ENCODE measurements at regions of chr6 and their contacts with region 1.

Region 1: DNA sequence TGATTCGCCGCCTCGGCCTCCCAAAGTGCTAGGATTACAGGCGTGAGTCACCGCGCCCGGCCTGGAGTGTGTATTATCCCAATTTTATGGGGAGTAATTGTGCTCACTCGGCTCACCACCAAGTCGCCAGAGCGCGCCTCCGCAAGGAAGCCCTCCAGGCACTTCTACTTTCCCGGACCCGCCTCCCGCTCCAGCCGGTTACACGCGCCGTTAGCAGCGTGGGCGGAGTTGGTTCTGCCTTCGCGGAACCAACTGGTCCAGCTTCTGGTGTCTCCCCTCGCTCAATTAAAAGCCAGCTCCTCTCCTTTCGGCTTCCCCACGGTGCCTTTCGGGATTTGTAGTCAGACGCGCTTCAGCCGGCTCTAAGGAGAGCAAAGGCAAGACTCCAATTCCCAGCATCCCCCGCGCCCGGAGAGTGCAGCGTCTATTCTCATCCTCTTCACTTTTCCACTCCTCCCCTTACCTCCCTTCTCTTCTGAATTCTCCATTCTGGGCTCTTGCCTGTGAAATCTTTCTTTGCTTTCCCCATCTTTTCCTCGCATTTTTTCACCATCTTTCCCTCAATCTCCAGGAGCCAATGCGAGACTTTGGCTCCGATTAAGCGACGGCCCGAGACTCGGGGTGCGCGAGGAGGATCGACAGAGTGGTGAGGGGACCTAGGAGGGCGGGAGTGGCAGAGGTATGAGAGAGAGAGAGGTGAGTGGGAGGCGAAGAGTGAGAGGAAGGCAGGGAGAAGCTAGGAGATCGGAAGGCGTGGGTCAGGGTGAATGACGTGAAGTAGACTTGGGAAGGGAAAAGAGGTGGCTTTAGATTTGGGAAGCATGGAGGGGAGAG is at the start of gene GTF2H4:
- DNase-seq: peak; percentile 92
- H3K4me3 Mint-ChIP-seq: peak within 1 kb of the TSS; percentile 99
- H3K27ac Mint-ChIP-seq: peak within 1 kb of the TSS; percentile 72
- H3K4me1 Mint-ChIP-seq: peaks cover 15% of the 10 kb centered on the region
- H3K27me3 Mint-ChIP-seq: no peaks in the 10 kb centered on the region
- total RNA-seq, gene GTF2H4: 65.3 and 71.3 TPM in 2 replicates

Region 2: DNA sequence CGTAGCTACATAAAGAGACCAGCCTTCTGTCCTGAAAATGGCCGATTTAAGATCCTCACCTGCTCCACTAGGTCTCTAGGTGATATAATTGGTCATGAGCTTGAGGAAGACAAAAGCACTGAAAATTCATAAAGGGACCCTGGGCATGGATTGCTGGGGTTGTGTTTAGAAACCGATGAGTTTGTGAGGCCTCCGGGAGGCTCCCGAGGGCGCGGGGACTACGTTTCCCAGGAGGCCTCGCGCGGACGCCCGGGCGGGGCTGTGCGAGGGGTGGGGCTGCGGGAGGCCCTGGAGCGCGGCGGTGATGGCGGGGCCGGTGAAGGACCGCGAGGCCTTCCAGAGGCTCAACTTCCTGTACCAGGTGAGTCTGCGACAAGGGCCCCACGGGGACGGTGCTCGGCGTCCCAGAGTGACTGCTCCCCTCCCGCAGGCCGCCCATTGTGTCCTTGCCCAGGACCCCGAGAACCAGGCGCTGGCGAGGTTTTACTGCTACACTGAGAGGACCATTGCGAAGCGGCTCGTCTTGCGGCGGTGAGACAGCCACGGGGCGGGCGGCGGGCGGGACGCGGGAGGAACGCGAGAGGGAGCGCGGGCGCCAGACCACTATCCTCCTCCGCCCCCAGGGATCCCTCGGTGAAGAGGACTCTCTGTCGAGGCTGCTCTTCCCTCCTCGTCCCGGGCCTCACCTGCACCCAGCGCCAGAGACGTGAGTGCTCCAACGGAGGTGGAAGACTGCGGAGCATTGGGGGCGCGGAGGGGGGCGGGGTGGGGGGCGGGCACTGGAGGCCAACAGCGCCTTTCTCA is 562.9 kb before region 1 on chr6 and contains the start of gene RPP21:
- intact Hi-C with region 1: loop called (anchors 1 kb)
- DNase-seq: peak; percentile 84
- H3K4me3 Mint-ChIP-seq: peak within 1 kb of the TSS; percentile 91
- H3K27ac Mint-ChIP-seq: peak within 1 kb of the TSS; percentile 80
- H3K4me1 Mint-ChIP-seq: peaks cover 39% of the 10 kb centered on the region
- H3K27me3 Mint-ChIP-seq: peaks cover 5% of the 10 kb centered on the region
- total RNA-seq, gene RPP21: 54.2 and 62.8 TPM in 2 replicates

Region 3: GRCh38 chr6:30646458-30647241 is 261.3 kb before region 1 on chr6 and contains the start of gene C6orf136:
- intact Hi-C with region 1: loop called (anchors 1 kb)
- DNase-seq: peak; percentile 89
- H3K4me3 Mint-ChIP-seq: peak within 1 kb of the TSS; percentile 90
- H3K27ac Mint-ChIP-seq: peak within 1 kb of the TSS; percentile 91
- H3K4me1 Mint-ChIP-seq: peaks cover 23% of the 10 kb centered on the region
- H3K27me3 Mint-ChIP-seq: no peaks in the 10 kb centered on the region
- total RNA-seq, gene C6orf136: 23.9 and 36.0 TPM in 2 replicates

Region 4: DNA sequence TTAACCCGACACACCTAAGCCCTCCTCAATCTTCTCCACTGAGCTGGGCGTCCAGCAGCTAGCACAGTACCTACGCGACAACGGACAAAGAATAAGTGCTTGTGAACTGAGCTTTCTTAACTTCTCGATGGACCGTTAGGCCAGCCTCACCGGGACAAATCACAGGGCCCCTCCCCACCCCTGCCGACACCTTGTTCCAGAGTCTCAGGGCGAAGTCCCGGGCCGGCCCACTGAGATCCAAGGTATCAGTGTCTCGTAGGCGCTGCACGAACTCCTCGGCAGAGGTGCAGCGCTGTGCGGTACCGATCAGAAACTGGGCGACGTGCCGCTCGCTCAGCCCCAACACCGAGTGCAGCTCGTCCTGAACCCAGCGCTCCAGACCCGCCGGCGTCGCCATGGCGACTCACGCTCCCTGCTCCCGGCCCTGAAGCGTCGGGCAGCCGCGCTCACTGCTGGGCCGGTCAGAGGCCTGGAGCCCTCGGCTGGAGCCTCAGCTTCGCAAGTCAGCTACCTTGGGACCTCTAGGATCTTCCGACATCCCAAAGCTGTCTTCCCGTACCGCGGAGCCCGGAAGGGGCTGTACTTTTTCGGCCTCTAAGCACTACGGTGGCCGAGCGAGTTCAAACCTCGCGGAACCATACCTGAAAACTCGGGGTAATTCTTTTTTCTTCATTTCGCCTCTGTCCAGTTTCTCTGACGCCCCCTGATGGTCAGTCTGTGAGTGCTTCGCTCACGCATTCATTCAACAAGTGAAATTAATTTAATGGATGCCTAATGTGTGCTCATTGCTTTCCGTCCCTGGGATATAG is 235.3 kb before region 1 on chr6 and contains the start of gene DHX16:
- intact Hi-C with region 1: loop called (anchors 5 kb)
- DNase-seq: peak; percentile 85
- H3K4me3 Mint-ChIP-seq: peak within 1 kb of the TSS; percentile 87
- H3K27ac Mint-ChIP-seq: peak within 1 kb of the TSS; percentile 76
- H3K4me1 Mint-ChIP-seq: peaks cover 28% of the 10 kb centered on the region
- H3K27me3 Mint-ChIP-seq: no peaks in the 10 kb centered on the region
- total RNA-seq, gene DHX16: 52.0 and 54.2 TPM in 2 replicates

Region 5: DNA sequence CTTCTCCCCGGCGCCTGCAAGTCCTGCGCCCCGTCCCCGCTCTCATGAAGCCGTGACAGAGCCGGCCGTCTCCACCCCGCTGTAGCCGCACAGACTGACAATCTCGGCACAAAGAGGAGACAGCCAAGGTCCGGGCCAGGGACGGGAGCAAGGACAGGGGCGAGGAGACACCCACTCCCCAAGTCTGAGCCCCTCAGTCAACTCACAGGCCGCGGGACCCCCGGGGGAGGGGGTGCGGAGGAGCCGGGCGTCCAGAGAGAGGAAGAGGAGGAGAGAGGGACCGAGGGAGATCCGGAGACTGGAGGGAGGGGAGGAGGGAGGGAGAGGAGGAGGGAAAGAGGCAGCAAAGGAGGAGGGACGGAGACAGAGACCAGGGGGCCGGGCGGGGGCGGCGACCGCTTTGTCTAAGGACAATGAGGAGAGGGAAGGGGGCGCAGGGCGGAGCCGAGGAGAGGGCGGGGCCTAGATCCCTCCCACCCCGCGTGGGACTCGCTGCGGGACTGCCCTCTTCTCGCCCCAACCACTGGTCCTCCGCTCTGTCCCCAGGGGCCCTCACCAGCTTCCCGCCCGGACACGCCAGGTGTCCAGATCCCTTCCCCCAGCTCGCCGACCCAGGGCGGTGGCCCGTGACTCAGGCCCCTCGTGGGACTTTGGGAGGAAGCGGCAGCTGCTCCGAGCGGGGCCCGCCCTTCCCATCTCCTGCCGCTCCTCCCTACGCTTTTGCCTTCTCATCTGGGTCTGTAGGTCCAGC is 220.9 kb before region 1 on chr6:
- intact Hi-C with region 1: loop called (anchors 1 kb)
- DNase-seq: peak; percentile 83
- H3K4me3 Mint-ChIP-seq: peak overlapping the region; percentile 94
- H3K27ac Mint-ChIP-seq: peak overlapping the region; percentile 87
- H3K4me1 Mint-ChIP-seq: peaks cover 50% of the 10 kb centered on the region
- H3K27me3 Mint-ChIP-seq: no peaks in the 10 kb centered on the region

Region 6: DNA sequence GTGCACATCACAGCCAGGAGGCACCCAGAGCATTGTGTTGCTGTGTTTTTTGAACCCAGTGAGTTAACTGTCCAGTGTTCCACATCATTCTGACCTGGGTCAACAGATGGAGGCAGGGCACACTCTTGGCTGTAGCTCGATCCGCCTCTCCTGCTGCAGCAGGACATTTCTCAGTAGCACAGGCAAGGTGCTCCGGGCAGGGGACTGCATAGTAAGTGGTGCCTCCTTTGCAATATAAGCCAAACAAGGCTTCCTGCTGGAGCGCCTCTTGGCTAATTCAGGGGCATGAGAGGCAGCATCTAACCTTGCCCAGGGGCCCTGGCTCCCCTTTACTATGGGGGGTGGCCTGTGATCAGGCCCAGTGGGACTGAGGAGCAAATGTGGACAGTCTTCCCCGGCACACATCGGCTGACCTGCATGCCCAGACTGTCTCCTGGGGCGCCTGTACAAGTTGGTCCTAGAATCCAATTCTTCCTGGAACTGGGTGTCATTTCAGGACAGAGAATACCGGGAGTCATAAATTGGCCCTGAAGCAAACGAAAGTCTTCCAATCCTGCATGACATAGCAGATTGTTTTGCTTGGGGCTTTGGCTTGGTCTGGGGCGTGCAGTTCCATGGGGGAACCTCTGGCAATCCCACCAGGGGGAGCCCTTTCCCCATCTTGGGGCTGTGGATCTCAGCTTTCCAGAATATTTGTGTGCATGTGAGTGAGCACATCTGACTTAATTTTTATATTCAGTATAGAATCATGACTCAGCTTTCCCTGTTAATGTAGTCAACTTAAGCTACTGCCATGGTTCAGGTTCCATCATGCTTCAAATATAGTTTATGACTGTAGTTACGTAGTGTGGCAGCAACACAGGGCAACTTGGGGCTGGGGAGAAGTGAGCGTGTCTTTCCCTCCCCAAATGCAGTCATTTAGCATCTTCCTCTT is 79.7 kb before region 1 on chr6:
- intact Hi-C with region 1: loop called (anchors 1 kb)
- DNase-seq: peak; percentile 66
- H3K4me3 Mint-ChIP-seq: peak overlapping the region; percentile 96
- H3K27ac Mint-ChIP-seq: peak overlapping the region; percentile 98
- H3K4me1 Mint-ChIP-seq: peaks cover 65% of the 10 kb centered on the region
- H3K27me3 Mint-ChIP-seq: no peaks in the 10 kb centered on the region

Region 7: DNA sequence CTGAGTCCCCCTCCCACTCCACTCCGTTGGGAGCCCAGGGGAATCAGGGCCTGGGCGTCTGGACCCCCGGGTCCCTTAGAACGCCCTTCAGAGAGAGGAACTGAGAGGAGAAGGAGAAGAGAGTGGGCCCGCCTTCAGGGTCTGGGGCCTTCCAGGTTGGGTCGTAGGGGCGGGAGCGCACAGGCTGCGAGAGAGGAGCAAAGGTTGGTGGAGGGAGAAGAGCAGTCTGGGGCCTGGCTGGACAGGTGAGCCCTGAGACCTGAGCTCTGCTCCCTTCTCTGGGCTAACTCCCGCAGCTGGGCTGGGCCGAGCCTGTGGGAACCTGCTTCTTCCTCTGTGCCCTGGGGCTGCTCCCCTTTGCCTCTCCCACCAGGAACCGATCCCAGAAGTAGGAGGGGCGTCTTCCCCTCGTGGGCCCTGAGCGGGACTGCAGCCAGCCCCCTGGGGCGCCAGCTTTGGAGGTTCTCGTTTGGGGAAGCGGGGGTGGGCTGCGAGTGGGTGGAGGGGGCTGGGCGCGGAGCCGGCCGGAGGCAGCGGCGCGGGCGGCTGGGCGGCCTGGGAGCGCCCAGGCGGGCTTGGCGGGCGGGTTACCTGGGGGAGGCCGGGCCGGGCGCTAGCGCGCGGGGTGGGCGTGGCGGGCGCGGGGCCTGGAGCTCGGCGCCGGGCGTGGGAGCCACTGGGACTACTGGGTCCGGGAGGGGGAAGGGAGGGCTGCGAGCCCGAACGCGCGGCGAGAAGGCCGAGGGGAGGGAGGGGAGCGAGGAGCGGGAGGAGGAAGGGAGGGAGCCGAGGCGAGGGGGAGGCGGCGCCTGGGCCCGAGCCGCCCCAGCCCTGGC is 24.1 kb before region 1 on chr6 and contains the start of gene DDR1:
- intact Hi-C with region 1: loop called (anchors 1 kb)
- DNase-seq: no peak
- H3K4me3 Mint-ChIP-seq: peak within 1 kb of the TSS; percentile 77
- H3K27ac Mint-ChIP-seq: peak within 1 kb of the TSS; percentile 65
- H3K4me1 Mint-ChIP-seq: peaks cover 45% of the 10 kb centered on the region
- H3K27me3 Mint-ChIP-seq: peaks cover 3% of the 10 kb centered on the region
- total RNA-seq, gene DDR1: 21.4 and 24.8 TPM in 2 replicates

Region 8: GRCh38 chr6:30926644-30927043 is 18.7 kb after region 1 on chr6:
- intact Hi-C with region 1: no loop called
- DNase-seq: no peak
- H3K4me3 Mint-ChIP-seq: no peak overlapping the region
- H3K27ac Mint-ChIP-seq: no peak overlapping the region
- H3K4me1 Mint-ChIP-seq: no peaks in the 10 kb centered on the region
- H3K27me3 Mint-ChIP-seq: no peaks in the 10 kb centered on the region

Region 9: GRCh38 chr6:30974488-30975252 is 66.7 kb after region 1 on chr6:
- intact Hi-C with region 1: no loop called
- DNase-seq: no peak
- H3K4me3 Mint-ChIP-seq: no peak overlapping the region
- H3K27ac Mint-ChIP-seq: no peak overlapping the region
- H3K4me1 Mint-ChIP-seq: no peaks in the 10 kb centered on the region
- H3K27me3 Mint-ChIP-seq: peaks cover 34% of the 10 kb centered on the region